HepG2 (cell line): ENCODE measurements at regions of chr17 and their contacts with region 1.

Region 1: GRCh38 chr17:42843358-42843934 is 934 bp upstream of the AOC2 start:
- DNase-seq: peak; percentile 73
- ATAC-seq: peak; percentile 71
- H3K4me3 ChIP-seq: no peak overlapping the region
- H3K27ac ChIP-seq: no peak overlapping the region
- H3K4me1 ChIP-seq: peaks cover 11% of the 10 kb centered on the region; the same call in 1 of the 2 replicates
- H3K27me3 ChIP-seq: no peaks in the 10 kb centered on the region
- CTCF ChIP-seq: peak; percentile 97
- EP300 ChIP-seq: no peak
- POLR2A ChIP-seq: peak in 1 of 2 experiments; percentile 43; a peak in 1 of 4 replicates
- RAD21 ChIP-seq: peak; percentile 97

Region 2: DNA sequence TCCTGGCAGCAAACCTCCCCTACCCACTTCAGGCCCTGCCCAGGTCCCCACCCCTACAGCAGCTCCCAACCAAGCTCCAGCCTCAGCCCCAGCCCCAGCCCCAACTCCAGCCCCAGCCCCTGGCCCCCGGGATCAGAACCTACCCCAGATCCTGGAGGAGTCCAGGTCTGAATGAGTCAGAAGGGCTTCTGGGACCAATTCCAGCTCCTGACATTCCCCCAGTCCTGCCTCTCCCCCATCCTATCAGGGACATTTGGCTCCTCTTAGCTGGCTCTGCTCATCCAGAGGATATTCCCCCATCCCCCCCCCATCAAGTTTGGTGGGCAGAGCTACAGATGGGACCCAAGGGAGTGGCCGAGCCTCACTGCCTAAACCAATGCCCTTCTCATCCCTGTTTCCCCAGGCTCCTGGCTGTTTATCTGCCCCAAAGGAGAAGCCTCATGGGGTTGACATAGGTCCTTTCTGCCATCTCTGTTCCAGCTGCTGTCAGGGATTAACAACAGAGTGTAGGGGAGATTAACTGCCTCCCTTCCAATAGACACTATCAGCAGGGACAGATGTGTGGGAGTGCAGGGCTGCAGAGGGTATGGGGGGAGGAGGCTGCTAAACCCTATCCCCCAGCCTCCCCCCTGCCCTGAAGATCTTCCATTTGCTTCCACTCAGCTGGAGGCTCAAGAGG is 144.6 kb before region 1 on chr17:
- CTCF ChIA-PET with region 1: no interaction called
- POLR2A ChIA-PET with region 1: no interaction called
- in situ Hi-C with region 1: no loop called
- intact Hi-C with region 1: no loop called
- DNase-seq: no peak
- ATAC-seq: no peak
- H3K4me3 ChIP-seq: no peak overlapping the region
- H3K27ac ChIP-seq: no peak overlapping the region
- H3K4me1 ChIP-seq: no peaks in the 10 kb centered on the region
- H3K27me3 ChIP-seq: no peaks in the 10 kb centered on the region
- CTCF ChIP-seq: no peak
- EP300 ChIP-seq: no peak
- POLR2A ChIP-seq: no peak
- RAD21 ChIP-seq: no peak

Region 3: GRCh38 chr17:42832974-42833766 is 10.3 kb before region 1 on chr17 and contains the start of gene PSME3:
- CTCF ChIA-PET with region 1: no interaction called
- POLR2A ChIA-PET with region 1: interaction called, 14 read pairs
- in situ Hi-C with region 1: no loop called
- intact Hi-C with region 1: no loop called
- DNase-seq: peak; percentile 88
- ATAC-seq: peak; percentile 95
- H3K4me3 ChIP-seq: peak within 1 kb of the TSS; percentile 92 to 98 (median 92)
- H3K27ac ChIP-seq: peak within 1 kb of the TSS; percentile 90
- H3K4me1 ChIP-seq: peaks cover 40% of the 10 kb centered on the region
- H3K27me3 ChIP-seq: no peaks in the 10 kb centered on the region; a peak in 1 of 5 replicates
- CTCF ChIP-seq: peak; percentile 37
- EP300 ChIP-seq: peak in 1 of 2 experiments; percentile 26; a peak in 2 of 4 replicates
- POLR2A ChIP-seq: peak; percentile 93 to 97
- RAD21 ChIP-seq: peak; percentile 30; the same call in 1 of the 2 replicates
- total RNA-seq, gene PSME3: 135 and 202 TPM in 2 replicates

Region 4: GRCh38 chr17:42937712-42938596 is 94.5 kb after region 1 on chr17:
- CTCF ChIA-PET with region 1: interaction called, 68 read pairs
- POLR2A ChIA-PET with region 1: interaction called, 5 read pairs
- in situ Hi-C with region 1: no loop called
- intact Hi-C with region 1: loop called (anchors 1 kb)
- DNase-seq: peak; percentile 73
- ATAC-seq: peak; percentile 88
- H3K4me3 ChIP-seq: no peak overlapping the region
- H3K27ac ChIP-seq: no peak overlapping the region
- H3K4me1 ChIP-seq: peaks cover 46% of the 10 kb centered on the region
- H3K27me3 ChIP-seq: no peaks in the 10 kb centered on the region; a peak in 2 of 5 replicates
- CTCF ChIP-seq: peak; percentile 93
- EP300 ChIP-seq: no peak
- POLR2A ChIP-seq: no peak
- RAD21 ChIP-seq: peak; percentile 96

Region 5: GRCh38 chr17:42980398-42981397 is 137.3 kb after region 1 on chr17 and contains the start of gene RUNDC1:
- CTCF ChIA-PET with region 1: no interaction called
- POLR2A ChIA-PET with region 1: no interaction called
- in situ Hi-C with region 1: loop called (anchors 10 kb)
- intact Hi-C with region 1: loop called (anchors 5 kb)
- DNase-seq: peak; percentile 85
- ATAC-seq: peak; percentile 85
- H3K4me3 ChIP-seq: peak within 1 kb of the TSS; percentile 77 to 97 (median 91)
- H3K27ac ChIP-seq: peak within 1 kb of the TSS; percentile 71
- H3K4me1 ChIP-seq: peaks cover 46% of the 10 kb centered on the region
- H3K27me3 ChIP-seq: peaks cover 0 to 3% of the 10 kb centered on the region in 2 experiments; a peak in 1 of 5 replicates
- CTCF ChIP-seq: peak; percentile 72
- EP300 ChIP-seq: no peak
- POLR2A ChIP-seq: peak in 1 of 2 experiments; percentile 64; a peak in 3 of 4 replicates
- RAD21 ChIP-seq: peak; percentile 90
- total RNA-seq, gene RUNDC1: 9.4 and 10.3 TPM in 2 replicates